ENCODE measurements at regions of chr14 and their contacts with region 1.

Region 1: DNA sequence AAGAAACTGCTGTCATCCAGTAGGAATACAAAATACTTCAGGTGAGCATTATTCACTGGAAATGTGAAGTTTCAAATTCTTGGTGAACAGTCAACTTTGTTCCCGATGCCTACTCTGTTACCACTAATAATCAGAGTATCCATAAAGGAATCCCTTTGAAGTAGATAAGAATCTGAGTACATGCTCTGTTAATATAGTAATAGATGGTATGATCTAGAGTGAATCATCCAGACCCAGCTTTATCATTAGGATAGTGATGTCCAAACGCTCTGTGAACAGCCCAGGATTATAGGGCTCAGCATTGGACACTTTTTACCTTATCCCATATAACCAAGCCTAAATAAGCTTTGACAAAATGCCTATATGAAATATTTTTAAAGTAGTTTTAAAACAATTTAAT is 33.3 kb downstream of the PPP2R3C start:
- DNase-seq: no peak
- H3K4me3 Mint-ChIP-seq: no peak overlapping the region
- H3K27ac Mint-ChIP-seq: no peak overlapping the region
- H3K4me1 Mint-ChIP-seq: no peaks in the 10 kb centered on the region
- H3K27me3 Mint-ChIP-seq: no peaks in the 10 kb centered on the region

Region 2: GRCh38 chr14:35020713-35021112 is 67.8 kb before region 1 on chr14:
- intact Hi-C with region 1: loop called (anchors 2 kb)
- DNase-seq: no peak
- H3K4me3 Mint-ChIP-seq: no peak overlapping the region
- H3K27ac Mint-ChIP-seq: no peak overlapping the region
- H3K4me1 Mint-ChIP-seq: no peaks in the 10 kb centered on the region
- H3K27me3 Mint-ChIP-seq: no peaks in the 10 kb centered on the region